ENCODE measurements at regions of chr2 and their contacts with region 1.

Region 1: GRCh38 chr2:99154643-99155536 is at the starts of genes LIPT1 and TSGA10:
- DNase-seq: peak; percentile 92
- H3K4me3 Mint-ChIP-seq: no peak within 1 kb of the TSS
- H3K27ac Mint-ChIP-seq: peak within 1 kb of the TSS; percentile 95
- H3K4me1 Mint-ChIP-seq: peaks cover 31% of the 10 kb centered on the region
- H3K27me3 Mint-ChIP-seq: no peaks in the 10 kb centered on the region
- total RNA-seq, gene LIPT1: 2.2 and 3.3 TPM in 2 replicates
- total RNA-seq, gene TSGA10: 3.0 and 4.1 TPM in 2 replicates

Region 2: DNA sequence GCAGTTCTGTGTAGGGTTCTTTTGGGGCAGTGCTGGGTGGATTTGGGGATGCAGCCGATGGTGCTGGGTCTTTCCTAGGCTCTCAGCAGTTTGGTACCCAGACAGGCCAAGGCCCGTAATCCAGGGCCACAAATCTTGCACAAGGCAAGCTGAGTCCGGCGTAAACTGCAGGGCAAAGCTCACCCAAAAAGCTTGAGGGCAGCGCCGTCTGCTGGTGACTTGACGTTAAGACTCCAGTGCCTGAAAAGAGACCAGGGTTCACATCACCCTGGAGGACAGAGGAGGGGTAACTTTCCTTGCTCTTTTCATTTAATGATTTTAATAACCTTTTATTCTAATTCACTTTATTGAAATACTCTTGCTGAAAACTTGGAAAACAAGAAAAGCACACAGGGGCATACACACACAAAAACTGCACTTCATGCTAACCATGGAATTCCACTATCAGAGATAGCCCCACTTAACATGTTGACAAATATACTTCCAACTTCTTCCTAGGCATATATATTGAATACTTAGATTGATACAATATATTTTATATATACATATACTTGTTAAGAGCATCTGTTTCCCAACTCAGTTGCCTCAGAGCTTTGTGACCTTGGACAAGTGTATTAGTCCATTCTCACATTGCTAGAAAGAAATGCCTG is 769.7 kb before region 1 on chr2:
- intact Hi-C with region 1: no loop called
- DNase-seq: peak; percentile 59
- H3K4me3 Mint-ChIP-seq: no peak overlapping the region
- H3K27ac Mint-ChIP-seq: no peak overlapping the region
- H3K4me1 Mint-ChIP-seq: no peaks in the 10 kb centered on the region
- H3K27me3 Mint-ChIP-seq: peaks cover 6% of the 10 kb centered on the region

Region 3: GRCh38 chr2:99141110-99142108 is 13.5 kb before region 1 on chr2 and contains the start of gene C2orf15:
- intact Hi-C with region 1: loop called (anchors 1 kb)
- DNase-seq: peak; percentile 93
- H3K4me3 Mint-ChIP-seq: peak within 1 kb of the TSS; percentile 96
- H3K27ac Mint-ChIP-seq: peak within 1 kb of the TSS; percentile 82
- H3K4me1 Mint-ChIP-seq: peaks cover 10% of the 10 kb centered on the region
- H3K27me3 Mint-ChIP-seq: peaks cover 14% of the 10 kb centered on the region
- total RNA-seq, gene C2orf15: 0.29 TPM in 1 of 2 replicates, not detected in the other

Region 4: GRCh38 chr2:99242151-99242550 is 87.3 kb after region 1 on chr2:
- intact Hi-C with region 1: no loop called
- DNase-seq: no peak
- H3K4me3 Mint-ChIP-seq: no peak overlapping the region
- H3K27ac Mint-ChIP-seq: no peak overlapping the region
- H3K4me1 Mint-ChIP-seq: no peaks in the 10 kb centered on the region
- H3K27me3 Mint-ChIP-seq: no peaks in the 10 kb centered on the region

Region 5: GRCh38 chr2:99311451-99311850 is 156.6 kb after region 1 on chr2:
- intact Hi-C with region 1: no loop called
- DNase-seq: no peak
- H3K4me3 Mint-ChIP-seq: no peak overlapping the region
- H3K27ac Mint-ChIP-seq: no peak overlapping the region
- H3K4me1 Mint-ChIP-seq: no peaks in the 10 kb centered on the region
- H3K27me3 Mint-ChIP-seq: no peaks in the 10 kb centered on the region

Measured in activated T-helper 1 cell treated with anti-CD3 and anti-CD28 coated beads, Interleukin-12 subunit alpha, Interleukin-12 subunit beta, Interleukin-2, Interleukin-4 antibody, amounts not matched to agents 30 ng/mL and 10 ng/mL and 1 ng/mL, durations not matched to agents 14 hours and 24 hours and 36 hours (primary cell).